ENCODE measurements at regions of chr10 and their contacts with region 1.

Region 1: GRCh38 chr10:58980826-58981415 is 195.5 kb upstream of the PHYHIPL start:
- DNase-seq: no peak
- ATAC-seq: peak; percentile 45; the same call in 2 of the 3 replicates
- H3K4me3 ChIP-seq: no peak overlapping the region
- H3K27ac ChIP-seq: no peak overlapping the region
- H3K4me1 ChIP-seq: no peaks in the 10 kb centered on the region
- H3K27me3 ChIP-seq: no peaks in the 10 kb centered on the region
- CTCF ChIP-seq: no peak
- EP300 ChIP-seq: no peak
- POLR2A ChIP-seq: no peak
- RAD21 ChIP-seq: no peak

Region 2: DNA sequence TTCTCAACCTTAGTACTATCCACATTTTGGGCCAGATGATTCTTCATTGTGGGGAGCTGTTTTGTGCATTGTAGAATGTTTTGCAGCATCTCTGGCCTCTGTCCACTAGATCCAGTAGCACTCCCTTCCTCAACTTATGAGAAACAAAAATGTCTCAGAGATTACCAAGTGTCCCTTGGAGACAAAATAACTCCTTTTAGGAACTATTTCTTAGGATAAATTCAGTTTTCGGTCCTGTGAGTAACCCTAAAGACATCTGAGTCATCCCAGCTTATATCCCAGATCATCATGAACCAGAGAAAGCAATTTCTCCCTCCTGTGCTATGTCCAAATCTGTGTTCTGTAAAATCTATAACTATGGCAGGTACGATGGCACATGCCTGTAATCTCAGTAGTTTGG is 71.0 kb before region 1 on chr10:
- CTCF ChIA-PET with region 1: no interaction called
- POLR2A ChIA-PET with region 1: no interaction called
- RAD21 ChIA-PET with region 1: no interaction called
- SMC1A ChIA-PET with region 1: no interaction called
- in situ Hi-C with region 1: no loop called
- intact Hi-C with region 1: no loop called
- DNase-seq: no peak
- ATAC-seq: no peak
- H3K4me3 ChIP-seq: no peak overlapping the region
- H3K27ac ChIP-seq: no peak overlapping the region
- H3K4me1 ChIP-seq: no peaks in the 10 kb centered on the region
- H3K27me3 ChIP-seq: no peaks in the 10 kb centered on the region
- CTCF ChIP-seq: no peak
- EP300 ChIP-seq: no peak
- POLR2A ChIP-seq: no peak
- RAD21 ChIP-seq: no peak

Region 3: GRCh38 chr10:58967551-58968388 is 13.2 kb before region 1 on chr10:
- CTCF ChIA-PET with region 1: interaction called, 56 read pairs
- POLR2A ChIA-PET with region 1: interaction called, 6 read pairs
- RAD21 ChIA-PET with region 1: interaction called, 6 read pairs
- SMC1A ChIA-PET with region 1: interaction called, 123 read pairs
- in situ Hi-C with region 1: no loop called
- intact Hi-C with region 1: loop called (anchors 2 kb)
- DNase-seq: no peak
- ATAC-seq: peak; percentile 88
- H3K4me3 ChIP-seq: no peak overlapping the region
- H3K27ac ChIP-seq: no peak overlapping the region
- H3K4me1 ChIP-seq: no peaks in the 10 kb centered on the region
- H3K27me3 ChIP-seq: no peaks in the 10 kb centered on the region
- CTCF ChIP-seq: no peak
- EP300 ChIP-seq: no peak
- POLR2A ChIP-seq: no peak
- RAD21 ChIP-seq: no peak

Region 4: DNA sequence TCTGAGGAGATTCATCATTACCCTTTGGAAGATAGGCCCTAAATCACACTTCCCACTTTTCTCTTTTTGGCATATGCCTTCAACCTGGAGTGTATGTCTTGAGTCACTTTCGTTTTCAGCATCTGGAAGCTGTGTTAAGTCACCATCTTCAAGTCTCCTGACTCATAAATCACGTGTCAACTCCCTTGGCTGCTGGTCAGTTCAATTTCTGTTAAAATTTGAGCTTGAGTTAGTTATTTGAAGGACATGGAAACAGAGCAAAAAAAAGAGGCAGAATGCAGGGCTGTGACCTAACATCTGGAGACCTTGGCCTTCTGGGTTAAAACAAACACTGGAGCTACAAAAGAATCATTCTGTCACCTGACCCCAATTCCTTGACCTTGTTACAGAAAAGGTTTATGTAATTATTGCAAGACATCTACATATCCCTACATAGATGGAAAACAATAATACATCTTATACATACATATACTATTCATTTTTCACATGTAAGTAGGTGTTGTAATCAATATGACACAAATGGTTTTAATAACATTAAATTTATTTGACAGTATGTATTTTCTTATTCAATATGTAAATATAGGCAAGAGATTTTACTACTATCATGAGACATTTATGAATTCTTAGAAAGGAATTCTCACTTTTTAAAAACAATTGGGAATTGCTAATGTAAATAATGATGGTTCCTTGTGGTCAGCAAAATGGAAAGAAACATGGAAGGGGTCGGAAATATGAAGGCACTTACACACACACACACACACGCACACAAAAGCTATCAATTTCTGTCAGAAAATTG is 25.8 kb after region 1 on chr10:
- CTCF ChIA-PET with region 1: interaction called, 4 read pairs
- POLR2A ChIA-PET with region 1: interaction called, 3 read pairs
- RAD21 ChIA-PET with region 1: interaction called, 4 read pairs
- SMC1A ChIA-PET with region 1: interaction called, 12 read pairs
- in situ Hi-C with region 1: no loop called
- intact Hi-C with region 1: no loop called
- DNase-seq: no peak
- ATAC-seq: peak; percentile 49
- H3K4me3 ChIP-seq: no peak overlapping the region
- H3K27ac ChIP-seq: no peak overlapping the region
- H3K4me1 ChIP-seq: peaks cover 4% of the 10 kb centered on the region
- H3K27me3 ChIP-seq: no peaks in the 10 kb centered on the region
- CTCF ChIP-seq: no peak
- EP300 ChIP-seq: 0 out of 4 replicates have a peak, but pooled peaks of 1 of the 2 experiments have one; percentile 26
- POLR2A ChIP-seq: no peak
- RAD21 ChIP-seq: no peak

Measured in GM12878 (cell line).